GM12878 (cell line): ENCODE measurements at regions of chr2 and their contacts with region 1.

Region 1: GRCh38 chr2:157443795-157444640 is at the start of gene CYTIP:
- DNase-seq: peak; percentile 91
- ATAC-seq: peak; percentile 57
- H3K4me3 ChIP-seq: peak within 1 kb of the TSS; percentile 90
- H3K27ac ChIP-seq: peak within 1 kb of the TSS; percentile 98
- H3K4me1 ChIP-seq: peaks cover 8% of the 10 kb centered on the region; the same call in 1 of the 2 replicates
- H3K27me3 ChIP-seq: no peaks in the 10 kb centered on the region
- CTCF ChIP-seq: no peak
- EP300 ChIP-seq: peak; percentile 52 to 67; a peak in 3 of 4 replicates
- POLR2A ChIP-seq: peak; percentile 89
- RAD21 ChIP-seq: 0 out of 2 replicates have a peak, but pooled peaks have one; percentile 21
- polyA plus RNA-seq, gene CYTIP: 71.6 to 75.4 TPM

Region 2: DNA sequence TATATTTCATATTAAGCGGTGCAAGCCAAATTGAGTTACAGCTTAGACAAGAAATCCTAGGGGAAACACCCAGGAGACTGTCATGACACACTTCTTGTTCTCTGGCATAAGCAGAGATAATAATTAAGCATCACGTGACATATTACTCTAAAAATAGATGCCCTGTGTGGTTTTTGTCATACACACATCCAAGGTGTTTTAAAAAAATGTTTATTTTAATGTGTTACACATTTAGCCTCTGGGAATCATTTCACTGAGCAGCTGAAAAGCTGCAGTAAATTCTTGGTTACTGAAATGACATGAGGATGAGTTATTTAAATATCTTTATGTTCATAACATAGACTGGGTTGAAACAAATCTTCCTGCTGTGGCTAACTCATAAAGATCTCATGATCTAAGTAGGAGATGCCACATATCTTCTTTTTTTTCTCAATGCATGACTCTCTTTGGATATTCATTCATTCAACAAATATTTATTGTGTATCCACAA is 80.4 kb before region 1 on chr2:
- CTCF ChIA-PET with region 1: no interaction called
- POLR2A ChIA-PET with region 1: interaction called, 7 read pairs
- RAD21 ChIA-PET with region 1: interaction called, 20 read pairs
- SMC1A ChIA-PET with region 1: interaction called, 15 read pairs
- in situ Hi-C with region 1: no loop called
- intact Hi-C with region 1: no loop called
- DNase-seq: peak; percentile 50
- ATAC-seq: peak; percentile 72
- H3K4me3 ChIP-seq: no peak overlapping the region
- H3K27ac ChIP-seq: peak overlapping the region; percentile 56
- H3K4me1 ChIP-seq: peaks cover 14% of the 10 kb centered on the region
- H3K27me3 ChIP-seq: no peaks in the 10 kb centered on the region
- CTCF ChIP-seq: no peak
- EP300 ChIP-seq: no peak
- POLR2A ChIP-seq: no peak
- RAD21 ChIP-seq: no peak

Region 3: DNA sequence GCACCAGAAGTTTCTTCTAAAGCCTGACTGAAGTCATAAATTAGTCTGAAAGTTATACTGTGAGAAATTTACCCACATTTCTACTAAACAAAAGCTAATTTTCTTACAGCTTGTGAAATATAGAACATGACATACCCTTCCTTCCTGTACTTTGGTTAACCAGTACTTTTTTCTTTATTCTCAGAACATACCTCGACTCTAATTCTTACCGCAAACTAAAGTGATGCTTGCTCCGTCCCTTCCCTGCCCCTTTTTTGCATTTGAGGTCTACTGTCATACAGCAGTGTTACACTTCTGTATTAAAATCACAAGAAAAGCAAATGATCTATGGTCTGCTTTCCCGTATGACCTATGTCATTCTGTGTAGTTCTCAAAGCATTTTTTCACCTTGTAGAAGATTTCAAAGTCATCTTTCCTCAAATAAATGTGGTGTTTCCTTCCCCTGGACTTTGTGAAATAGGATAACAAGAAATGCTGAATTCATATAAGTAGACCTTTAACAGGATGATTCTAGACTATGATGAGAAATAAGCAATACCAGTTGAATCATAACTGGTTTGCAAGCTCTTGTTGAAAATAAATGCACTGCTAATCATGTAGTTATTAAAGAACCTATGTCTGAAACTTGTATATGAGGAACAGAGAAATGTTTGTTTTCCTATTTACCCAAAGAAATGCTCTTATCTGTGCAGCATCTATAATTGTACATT is 30.5 kb before region 1 on chr2:
- CTCF ChIA-PET with region 1: interaction called, 13 read pairs
- POLR2A ChIA-PET with region 1: interaction called, 47 read pairs
- RAD21 ChIA-PET with region 1: interaction called, 116 read pairs
- SMC1A ChIA-PET with region 1: interaction called, 218 read pairs
- in situ Hi-C with region 1: no loop called
- intact Hi-C with region 1: loop called (anchors 1 kb)
- DNase-seq: peak; percentile 97
- ATAC-seq: peak; percentile 87
- H3K4me3 ChIP-seq: no peak overlapping the region
- H3K27ac ChIP-seq: peak overlapping the region; percentile 86
- H3K4me1 ChIP-seq: peaks cover 38% of the 10 kb centered on the region
- H3K27me3 ChIP-seq: no peaks in the 10 kb centered on the region
- CTCF ChIP-seq: no peak
- EP300 ChIP-seq: peak; percentile 71 to 74; a peak in 2 of 4 replicates
- POLR2A ChIP-seq: peak; percentile 18; the same call in 1 of the 2 replicates
- RAD21 ChIP-seq: peak; percentile 37

Region 4: GRCh38 chr2:157433394-157433793 is 10.6 kb before region 1 on chr2:
- CTCF ChIA-PET with region 1: interaction called, 6 read pairs
- POLR2A ChIA-PET with region 1: interaction called, 14 read pairs
- RAD21 ChIA-PET with region 1: interaction called, 23 read pairs
- SMC1A ChIA-PET with region 1: interaction called, 25 read pairs
- in situ Hi-C with region 1: no loop called
- intact Hi-C with region 1: no loop called
- DNase-seq: no peak
- ATAC-seq: no peak
- H3K4me3 ChIP-seq: peak overlapping the region; percentile 35; the same call in 1 of the 2 replicates
- H3K27ac ChIP-seq: no peak overlapping the region
- H3K4me1 ChIP-seq: peaks cover 10% of the 10 kb centered on the region
- H3K27me3 ChIP-seq: no peaks in the 10 kb centered on the region
- CTCF ChIP-seq: no peak
- EP300 ChIP-seq: no peak
- POLR2A ChIP-seq: no peak
- RAD21 ChIP-seq: no peak

Region 5: GRCh38 chr2:157468931-157469708 is 25.1 kb after region 1 on chr2:
- CTCF ChIA-PET with region 1: interaction called, 14 read pairs
- POLR2A ChIA-PET with region 1: interaction called, 90 read pairs
- RAD21 ChIA-PET with region 1: interaction called, 125 read pairs
- SMC1A ChIA-PET with region 1: interaction called, 119 read pairs
- in situ Hi-C with region 1: no loop called
- intact Hi-C with region 1: loop called (anchors 1 kb)
- DNase-seq: peak; percentile 95
- ATAC-seq: peak; percentile 78
- H3K4me3 ChIP-seq: peak overlapping the region; percentile 46; the same call in 1 of the 2 replicates
- H3K27ac ChIP-seq: peak overlapping the region; percentile 98
- H3K4me1 ChIP-seq: peaks cover 38% of the 10 kb centered on the region
- H3K27me3 ChIP-seq: no peaks in the 10 kb centered on the region
- CTCF ChIP-seq: no peak
- EP300 ChIP-seq: peak; percentile 100
- POLR2A ChIP-seq: no peak
- RAD21 ChIP-seq: peak; percentile 22; the same call in 1 of the 2 replicates

Region 6: GRCh38 chr2:157492189-157492773 is 48.3 kb after region 1 on chr2:
- CTCF ChIA-PET with region 1: interaction called, 6 read pairs
- POLR2A ChIA-PET with region 1: interaction called, 3 read pairs
- RAD21 ChIA-PET with region 1: interaction called, 19 read pairs
- SMC1A ChIA-PET with region 1: interaction called, 11 read pairs
- in situ Hi-C with region 1: no loop called
- intact Hi-C with region 1: loop called (anchors 2 kb)
- DNase-seq: peak; percentile 43
- ATAC-seq: peak; percentile 98
- H3K4me3 ChIP-seq: no peak overlapping the region
- H3K27ac ChIP-seq: no peak overlapping the region
- H3K4me1 ChIP-seq: no peaks in the 10 kb centered on the region
- H3K27me3 ChIP-seq: no peaks in the 10 kb centered on the region
- CTCF ChIP-seq: peak; percentile 79 to 93 (median 82); a peak in 5 of 6 replicates
- EP300 ChIP-seq: no peak
- POLR2A ChIP-seq: no peak
- RAD21 ChIP-seq: peak; percentile 89

Region 7: DNA sequence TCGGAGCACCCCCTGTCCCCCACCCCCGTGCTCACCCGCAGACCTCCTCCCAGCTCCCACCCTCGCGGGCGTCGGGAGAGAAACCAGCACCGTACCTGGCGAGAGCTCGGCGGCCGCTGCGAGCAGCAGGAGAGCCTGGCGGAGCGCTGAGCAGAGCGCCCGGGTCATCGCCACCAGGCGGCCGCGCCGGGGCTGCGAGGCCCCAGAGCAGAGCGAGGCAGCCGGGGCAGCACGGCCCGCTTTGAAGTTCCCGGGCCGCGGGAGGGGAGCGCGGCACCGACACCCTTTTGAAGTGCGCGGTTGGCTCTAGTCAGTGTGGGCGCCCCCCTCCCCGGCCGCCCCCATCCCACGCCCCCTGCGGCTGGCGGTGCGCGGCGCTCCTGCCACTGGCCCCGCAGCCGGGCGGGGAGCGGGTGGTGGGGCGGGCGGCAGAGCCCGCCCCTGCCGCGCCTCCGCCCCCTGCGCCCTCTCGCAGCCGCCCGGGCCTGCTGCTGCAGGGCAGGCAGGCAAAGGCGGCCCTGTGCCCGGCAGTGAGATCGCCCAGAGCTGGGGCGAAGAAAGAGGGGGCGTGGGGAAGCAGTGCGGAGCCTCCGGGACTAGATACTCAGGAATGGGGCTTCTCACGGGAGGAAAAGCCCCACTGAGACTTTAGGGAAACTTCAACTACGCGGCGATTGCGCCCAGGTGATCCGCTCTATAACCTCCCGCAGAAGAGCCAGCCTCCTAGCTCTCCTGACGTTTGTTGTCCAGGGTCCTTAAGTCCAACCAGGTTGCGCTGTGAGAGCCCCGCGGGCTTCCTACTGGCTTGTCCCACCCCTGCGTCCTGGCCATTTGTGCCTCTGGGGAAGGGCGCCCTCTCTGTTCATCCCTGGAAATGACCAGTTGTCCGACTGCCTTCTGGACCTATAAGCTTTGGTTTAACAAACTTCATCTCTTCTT is 184.7 kb after region 1 on chr2 and contains the start of gene ACVR1C:
- CTCF ChIA-PET with region 1: no interaction called
- POLR2A ChIA-PET with region 1: no interaction called
- RAD21 ChIA-PET with region 1: no interaction called
- SMC1A ChIA-PET with region 1: no interaction called
- in situ Hi-C with region 1: no loop called
- intact Hi-C with region 1: no loop called
- DNase-seq: no peak
- ATAC-seq: peak; percentile 91
- H3K4me3 ChIP-seq: peak within 1 kb of the TSS; percentile 16; the same call in 1 of the 2 replicates
- H3K27ac ChIP-seq: no peak within 1 kb of the TSS
- H3K4me1 ChIP-seq: no peaks in the 10 kb centered on the region
- H3K27me3 ChIP-seq: peaks cover 9 to 16% of the 10 kb centered on the region in 2 experiments
- CTCF ChIP-seq: peak in 2 of 3 experiments; percentile 14 to 36; a peak in 2 of 6 replicates
- EP300 ChIP-seq: no peak
- POLR2A ChIP-seq: no peak
- RAD21 ChIP-seq: no peak
- polyA plus RNA-seq, gene ACVR1C: not detected

Region 8: GRCh38 chr2:159185401-159186130 is 1741.5 kb after region 1 on chr2:
- CTCF ChIA-PET with region 1: no interaction called
- POLR2A ChIA-PET with region 1: no interaction called
- RAD21 ChIA-PET with region 1: no interaction called
- SMC1A ChIA-PET with region 1: no interaction called
- in situ Hi-C with region 1: no loop called
- intact Hi-C with region 1: no loop called
- DNase-seq: peak; percentile 48
- ATAC-seq: peak; percentile 85
- H3K4me3 ChIP-seq: 0 out of 2 replicates have a peak overlapping the region, but pooled peaks have one; percentile 34
- H3K27ac ChIP-seq: no peak overlapping the region
- H3K4me1 ChIP-seq: peaks cover 20% of the 10 kb centered on the region
- H3K27me3 ChIP-seq: no peaks in the 10 kb centered on the region
- CTCF ChIP-seq: peak; percentile 34 to 64 (median 51); a peak in 5 of 6 replicates
- EP300 ChIP-seq: no peak
- POLR2A ChIP-seq: no peak
- RAD21 ChIP-seq: peak; percentile 80